ENCODE measurements at regions of chr4 and their contacts with region 1.

Region 1: DNA sequence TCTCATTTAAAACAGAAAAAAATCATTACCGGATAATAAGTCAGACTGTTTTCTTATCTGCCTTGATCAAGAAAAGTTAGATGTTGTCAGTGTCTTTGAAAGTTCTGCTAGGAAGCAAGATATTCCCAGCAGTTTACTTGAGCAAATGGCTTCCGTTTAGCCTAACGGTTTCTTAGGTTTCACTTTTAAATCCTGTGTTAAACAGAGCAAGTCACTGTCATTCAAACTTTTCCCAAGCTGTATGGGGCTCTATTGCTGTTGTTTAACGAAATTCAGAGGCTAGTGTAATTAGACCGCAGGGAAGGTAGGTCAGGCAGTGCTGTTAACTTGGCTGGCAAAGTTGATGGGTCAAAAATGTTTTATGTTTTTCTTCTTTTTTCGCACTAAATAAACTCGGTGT is 80.3 kb upstream of the NEIL3 start:
- DNase-seq: no peak
- H3K4me3 Mint-ChIP-seq: peak overlapping the region; percentile 60
- H3K27ac Mint-ChIP-seq: peak overlapping the region; percentile 73
- H3K4me1 Mint-ChIP-seq: peaks cover 38% of the 10 kb centered on the region
- H3K27me3 Mint-ChIP-seq: no peaks in the 10 kb centered on the region

Region 2: DNA sequence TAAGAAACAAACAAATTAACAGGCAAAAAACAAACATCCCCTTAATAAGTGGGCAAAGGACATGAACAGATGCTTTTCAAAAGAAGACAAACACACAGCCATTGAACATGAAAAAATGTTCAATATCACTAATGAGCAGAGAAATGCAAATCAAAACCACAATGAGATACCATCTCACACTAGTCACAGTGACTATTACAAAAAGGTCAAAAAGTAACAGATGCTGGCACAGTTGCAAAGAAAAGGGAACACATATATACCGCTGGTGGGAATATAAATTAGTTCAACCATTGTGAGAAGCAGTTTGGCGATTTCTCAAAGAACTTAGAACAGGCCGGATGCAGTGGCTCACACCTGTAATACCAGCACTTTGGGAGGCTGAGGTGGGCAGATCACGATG is 65.8 kb before region 1 on chr4:
- intact Hi-C with region 1: no loop called
- DNase-seq: no peak
- H3K4me3 Mint-ChIP-seq: no peak overlapping the region
- H3K27ac Mint-ChIP-seq: no peak overlapping the region
- H3K4me1 Mint-ChIP-seq: peaks cover 14% of the 10 kb centered on the region
- H3K27me3 Mint-ChIP-seq: peaks cover 2% of the 10 kb centered on the region

Region 3: DNA sequence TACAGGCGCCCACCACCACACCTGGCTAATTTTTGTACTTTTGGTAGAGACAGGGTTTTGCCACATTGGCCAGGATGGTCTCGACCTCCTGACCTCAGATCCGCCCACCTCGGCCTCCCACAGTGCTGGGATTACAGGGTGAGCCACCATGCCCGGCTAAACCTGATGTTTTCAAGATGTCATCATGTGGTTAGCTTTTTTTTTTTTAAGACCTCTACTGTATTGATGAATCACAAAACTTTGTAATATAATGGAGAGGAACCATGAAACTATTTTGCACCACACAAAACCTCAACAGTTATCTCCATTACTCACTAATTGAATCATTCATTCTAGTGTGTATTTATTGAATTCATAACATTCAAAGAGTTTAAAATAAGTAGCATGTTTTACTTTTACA is 14.4 kb before region 1 on chr4:
- intact Hi-C with region 1: loop called (anchors 1 kb)
- DNase-seq: no peak
- H3K4me3 Mint-ChIP-seq: no peak overlapping the region
- H3K27ac Mint-ChIP-seq: no peak overlapping the region
- H3K4me1 Mint-ChIP-seq: peaks cover 18% of the 10 kb centered on the region
- H3K27me3 Mint-ChIP-seq: no peaks in the 10 kb centered on the region

Region 4: GRCh38 chr4:177242651-177243286 is 13.4 kb after region 1 on chr4:
- intact Hi-C with region 1: loop called (anchors 2 kb)
- DNase-seq: no peak
- H3K4me3 Mint-ChIP-seq: no peak overlapping the region
- H3K27ac Mint-ChIP-seq: peak overlapping the region; percentile 74
- H3K4me1 Mint-ChIP-seq: peaks cover 23% of the 10 kb centered on the region
- H3K27me3 Mint-ChIP-seq: peaks cover 3% of the 10 kb centered on the region

Region 5: GRCh38 chr4:177356921-177357320 is 127.6 kb after region 1 on chr4:
- intact Hi-C with region 1: no loop called
- DNase-seq: no peak
- H3K4me3 Mint-ChIP-seq: no peak overlapping the region
- H3K27ac Mint-ChIP-seq: no peak overlapping the region
- H3K4me1 Mint-ChIP-seq: peaks cover 3% of the 10 kb centered on the region
- H3K27me3 Mint-ChIP-seq: no peaks in the 10 kb centered on the region